Transverse colon (tissue), 4 donors: ENCODE measurements at regions of chr6 and their contacts with region 1.

Region 1: GRCh38 chr6:36912586-36912985 is 26.8 kb downstream of the C6orf89 start:
- DNase-seq: peak; percentile 14
- H3K4me3 ChIP-seq: no peak overlapping the region
- H3K27ac ChIP-seq: peak overlapping the region in 3 of 4 donors; percentile 44 to 54 (median 49)
- H3K4me1 ChIP-seq: peaks cover 0 to 36% (median 2%) of the 10 kb centered on the region in 4 donors
- H3K27me3 ChIP-seq: no peaks in the 10 kb centered on the region
- CTCF ChIP-seq: no peak
- EP300 ChIP-seq: no peak
- POLR2A ChIP-seq: no peak

Region 2: GRCh38 chr6:35893246-35893645 is 1019.3 kb before region 1 on chr6:
- in situ Hi-C with region 1: no loop called
- intact Hi-C with region 1: loop called (anchors 5 kb)
- DNase-seq: no peak
- H3K4me3 ChIP-seq: no peak overlapping the region
- H3K27ac ChIP-seq: no peak overlapping the region
- H3K4me1 ChIP-seq: no peaks in the 10 kb centered on the region
- H3K27me3 ChIP-seq: no peaks in the 10 kb centered on the region
- CTCF ChIP-seq: no peak
- EP300 ChIP-seq: no peak
- POLR2A ChIP-seq: no peak

Region 3: GRCh38 chr6:36241728-36242127 is 670.9 kb before region 1 on chr6:
- in situ Hi-C with region 1: no loop called
- intact Hi-C with region 1: no loop called
- DNase-seq: no peak
- H3K4me3 ChIP-seq: no peak overlapping the region
- H3K27ac ChIP-seq: no peak overlapping the region
- H3K4me1 ChIP-seq: peaks cover 0 to 13% (median under 1%) of the 10 kb centered on the region in 4 donors
- H3K27me3 ChIP-seq: no peaks in the 10 kb centered on the region
- CTCF ChIP-seq: no peak
- EP300 ChIP-seq: no peak
- POLR2A ChIP-seq: no peak